ENCODE measurements at regions of chr2 and their contacts with region 1.

Region 1: DNA sequence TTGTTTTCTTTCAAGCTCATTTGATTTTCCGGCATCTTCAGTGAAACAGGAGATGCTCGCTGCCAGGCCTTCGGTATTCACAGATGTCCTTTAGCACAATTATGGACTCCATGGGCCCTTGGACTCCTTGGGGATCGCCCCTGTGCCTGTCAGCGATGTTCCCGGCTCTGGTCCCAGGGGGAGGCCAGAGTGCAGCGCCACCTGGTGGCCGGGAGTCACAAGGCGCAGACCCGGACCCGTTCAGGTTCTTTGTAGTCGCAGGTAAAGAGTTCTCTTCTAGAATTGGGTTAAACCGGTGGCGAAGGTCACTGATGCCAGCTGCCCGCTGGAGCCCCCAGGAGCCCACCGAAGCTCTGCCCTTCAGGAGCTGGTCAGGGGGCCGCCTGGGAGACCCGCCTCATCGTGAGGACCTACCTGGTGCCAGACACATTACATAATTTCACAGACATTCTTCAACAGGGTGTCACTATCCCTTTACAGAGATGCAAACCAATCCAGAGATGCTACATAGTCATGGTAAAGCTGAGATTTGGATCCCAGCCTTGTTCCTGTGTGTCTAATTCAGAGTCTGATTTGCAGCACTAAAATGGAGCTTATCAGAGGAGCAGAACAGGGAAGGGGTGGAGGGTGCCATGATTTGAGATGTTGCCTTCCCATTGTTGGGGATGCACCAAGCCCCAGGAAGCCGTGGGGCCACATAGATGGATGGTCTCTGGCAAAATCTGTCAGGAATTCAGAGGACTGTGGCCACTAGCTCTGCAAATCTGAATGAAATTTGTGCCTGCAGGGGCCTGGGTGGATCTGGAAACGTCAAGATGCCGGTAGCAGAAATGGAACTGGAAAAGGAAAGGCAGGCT is 6.0 kb upstream of the INPP5D start:
- DNase-seq: peak; percentile 37 to 84 (median 76)
- ATAC-seq: peak; percentile 78
- H3K4me3 ChIP-seq: no peak overlapping the region
- H3K4me3 Mint-ChIP-seq: no peak overlapping the region
- H3K27ac ChIP-seq: no peak overlapping the region
- H3K27ac Mint-ChIP-seq: no peak overlapping the region
- H3K4me1 ChIP-seq: peaks cover 12% of the 10 kb centered on the region
- H3K4me1 Mint-ChIP-seq: peaks cover 19% of the 10 kb centered on the region
- H3K27me3 ChIP-seq: peaks cover 0 to 3% of the 10 kb centered on the region in 2 experiments
- H3K27me3 Mint-ChIP-seq: no peaks in the 10 kb centered on the region
- CTCF ChIP-seq: peak; percentile 97

Region 2: DNA sequence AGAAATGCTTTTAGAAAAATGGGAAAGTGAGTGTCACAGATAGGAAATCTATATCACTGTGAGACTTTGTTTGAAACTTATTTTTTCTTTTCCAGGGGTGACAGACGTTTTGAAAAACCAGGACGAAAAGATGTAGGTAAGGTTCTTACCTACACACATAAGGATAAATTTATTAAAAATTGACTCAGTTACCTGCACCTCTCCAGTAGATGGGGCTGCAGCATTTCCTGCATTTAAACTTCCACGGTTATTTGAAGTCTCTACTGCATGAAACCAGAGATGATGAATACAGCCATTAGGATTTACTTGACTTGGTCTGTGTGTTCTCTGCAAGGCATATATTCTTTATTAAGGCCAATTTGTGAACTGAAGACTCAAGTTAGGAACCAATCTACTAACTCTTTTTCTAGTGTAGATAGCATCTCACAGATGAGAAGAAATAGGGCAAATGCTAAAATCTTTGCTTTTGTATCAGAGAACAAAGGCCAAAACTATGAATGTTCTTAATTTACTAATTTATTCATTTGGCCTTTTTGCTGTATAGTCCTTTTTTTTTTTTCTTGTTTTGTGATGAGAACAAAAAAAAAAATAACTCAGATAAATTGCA is 292.8 kb before region 1 on chr2:
- CTCF ChIA-PET with region 1: no interaction called
- POLR2A ChIA-PET with region 1: no interaction called
- intact Hi-C with region 1: loop called in 1 of 2 experiments (anchors 10 kb)
- DNase-seq: peak in 7 of 9 experiments; percentile 2 to 63 (median 22)
- ATAC-seq: peak; percentile 69
- H3K4me3 ChIP-seq: no peak overlapping the region
- H3K4me3 Mint-ChIP-seq: no peak overlapping the region
- H3K27ac ChIP-seq: no peak overlapping the region
- H3K27ac Mint-ChIP-seq: no peak overlapping the region
- H3K4me1 ChIP-seq: no peaks in the 10 kb centered on the region
- H3K4me1 Mint-ChIP-seq: peaks cover 16% of the 10 kb centered on the region
- H3K27me3 ChIP-seq: no peaks in the 10 kb centered on the region
- H3K27me3 Mint-ChIP-seq: no peaks in the 10 kb centered on the region
- CTCF ChIP-seq: peak; percentile 50

Region 3: GRCh38 chr2:233033672-233034071 is 20.5 kb before region 1 on chr2:
- CTCF ChIA-PET with region 1: interaction called, 34 read pairs
- POLR2A ChIA-PET with region 1: no interaction called
- intact Hi-C with region 1: no loop called
- DNase-seq: no peak
- ATAC-seq: no peak
- H3K4me3 ChIP-seq: no peak overlapping the region
- H3K4me3 Mint-ChIP-seq: no peak overlapping the region
- H3K27ac ChIP-seq: no peak overlapping the region
- H3K27ac Mint-ChIP-seq: no peak overlapping the region
- H3K4me1 ChIP-seq: no peaks in the 10 kb centered on the region
- H3K4me1 Mint-ChIP-seq: no peaks in the 10 kb centered on the region
- H3K27me3 ChIP-seq: no peaks in the 10 kb centered on the region
- H3K27me3 Mint-ChIP-seq: no peaks in the 10 kb centered on the region
- CTCF ChIP-seq: no peak

Region 4: GRCh38 chr2:233084488-233084887 is 30.3 kb after region 1 on chr2:
- CTCF ChIA-PET with region 1: interaction called, 38 read pairs
- POLR2A ChIA-PET with region 1: interaction called, 89 read pairs
- intact Hi-C with region 1: loop called in 1 of 2 experiments (anchors 5 kb)
- DNase-seq: peak in 6 of 9 experiments; percentile 54 to 81 (median 66)
- ATAC-seq: peak; percentile 44
- H3K4me3 ChIP-seq: peak overlapping the region; percentile 13 to 16
- H3K4me3 Mint-ChIP-seq: peak overlapping the region; percentile 76
- H3K27ac ChIP-seq: peak overlapping the region; percentile 56 to 92
- H3K27ac Mint-ChIP-seq: peak overlapping the region; percentile 91
- H3K4me1 ChIP-seq: peaks cover 72% of the 10 kb centered on the region
- H3K4me1 Mint-ChIP-seq: peaks cover 85% of the 10 kb centered on the region
- H3K27me3 ChIP-seq: no peaks in the 10 kb centered on the region
- H3K27me3 Mint-ChIP-seq: no peaks in the 10 kb centered on the region
- CTCF ChIP-seq: no peak

Region 5: DNA sequence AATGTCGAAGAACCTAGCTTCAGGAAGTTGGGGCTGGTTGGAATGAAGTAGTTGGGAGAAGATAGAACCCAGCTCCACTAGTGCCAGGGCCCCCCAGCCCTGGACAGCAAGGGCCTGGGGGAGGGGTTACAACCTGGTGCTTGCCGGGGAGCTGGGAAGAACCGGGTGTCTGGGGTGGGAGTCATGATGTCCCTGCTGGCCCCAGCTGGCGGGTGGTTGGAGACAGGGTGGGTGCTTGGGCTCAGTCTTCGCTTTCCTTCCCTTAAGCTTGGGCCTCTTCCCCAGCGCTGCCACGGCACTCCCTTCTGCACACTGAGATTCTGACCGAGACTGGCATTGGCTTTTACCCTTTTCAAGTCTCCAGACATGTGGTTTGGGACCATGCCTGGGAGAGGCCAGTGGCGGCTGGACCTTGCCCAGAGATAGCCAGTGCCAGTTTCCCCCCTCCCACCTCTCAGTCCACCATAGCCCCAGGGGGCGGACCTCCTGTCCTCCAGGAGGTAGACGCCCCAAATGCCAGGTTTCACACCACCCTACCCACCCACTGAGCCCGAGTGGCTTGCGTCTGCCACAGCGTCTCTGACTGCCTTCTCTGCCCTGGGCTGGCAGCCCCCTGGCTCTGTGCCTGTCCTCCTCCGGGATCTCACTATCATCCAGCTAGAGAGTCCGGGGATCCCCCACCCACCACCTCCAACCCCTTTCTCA is 53.6 kb after region 1 on chr2:
- CTCF ChIA-PET with region 1: interaction called, 13 read pairs
- POLR2A ChIA-PET with region 1: no interaction called
- intact Hi-C with region 1: no loop called
- DNase-seq: no peak
- ATAC-seq: no peak
- H3K4me3 ChIP-seq: no peak overlapping the region
- H3K4me3 Mint-ChIP-seq: no peak overlapping the region
- H3K27ac ChIP-seq: peak overlapping the region in 1 of 2 experiments; percentile 46
- H3K27ac Mint-ChIP-seq: peak overlapping the region; percentile 53
- H3K4me1 ChIP-seq: peaks cover 56% of the 10 kb centered on the region
- H3K4me1 Mint-ChIP-seq: peaks cover 74% of the 10 kb centered on the region
- H3K27me3 ChIP-seq: no peaks in the 10 kb centered on the region
- H3K27me3 Mint-ChIP-seq: no peaks in the 10 kb centered on the region
- CTCF ChIP-seq: no peak

Region 6: DNA sequence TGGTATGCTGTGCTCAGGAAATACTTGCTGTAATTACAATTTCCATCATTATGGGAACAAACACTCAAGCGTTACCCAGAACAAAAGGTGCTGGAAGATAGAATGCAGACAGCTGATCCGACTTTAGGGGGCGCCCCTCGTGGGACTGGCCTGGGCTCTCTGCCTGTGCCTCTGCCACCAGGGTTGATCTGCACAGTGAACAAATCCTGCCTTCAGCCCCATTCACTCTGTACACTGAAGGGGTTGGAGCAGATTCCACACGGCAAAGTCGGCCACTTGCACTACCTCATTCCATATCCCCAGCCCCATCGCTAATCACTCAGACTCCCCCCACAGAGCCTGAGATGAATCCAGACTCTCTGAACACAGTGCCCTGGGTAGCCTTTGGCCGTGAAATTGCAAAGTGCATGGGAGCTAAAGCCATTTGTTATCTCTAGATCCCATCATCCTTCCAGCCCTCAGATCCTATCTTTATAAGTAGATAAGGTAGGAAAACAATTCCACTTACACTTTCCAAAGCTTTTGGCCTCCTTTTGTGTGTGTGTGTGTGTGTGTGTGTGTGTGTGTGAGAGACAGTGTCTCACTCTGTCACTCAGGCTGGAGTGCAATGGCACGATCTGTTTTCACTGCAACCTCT is 75.3 kb after region 1 on chr2:
- CTCF ChIA-PET with region 1: interaction called, 15 read pairs
- POLR2A ChIA-PET with region 1: no interaction called
- intact Hi-C with region 1: no loop called
- DNase-seq: no peak
- ATAC-seq: no peak
- H3K4me3 ChIP-seq: no peak overlapping the region
- H3K4me3 Mint-ChIP-seq: no peak overlapping the region
- H3K27ac ChIP-seq: no peak overlapping the region
- H3K27ac Mint-ChIP-seq: peak overlapping the region; percentile 18
- H3K4me1 ChIP-seq: peaks cover 12% of the 10 kb centered on the region
- H3K4me1 Mint-ChIP-seq: peaks cover 16% of the 10 kb centered on the region
- H3K27me3 ChIP-seq: no peaks in the 10 kb centered on the region
- H3K27me3 Mint-ChIP-seq: no peaks in the 10 kb centered on the region
- CTCF ChIP-seq: no peak